ENCODE measurements at regions of chr7 and their contacts with region 1.

Region 1: DNA sequence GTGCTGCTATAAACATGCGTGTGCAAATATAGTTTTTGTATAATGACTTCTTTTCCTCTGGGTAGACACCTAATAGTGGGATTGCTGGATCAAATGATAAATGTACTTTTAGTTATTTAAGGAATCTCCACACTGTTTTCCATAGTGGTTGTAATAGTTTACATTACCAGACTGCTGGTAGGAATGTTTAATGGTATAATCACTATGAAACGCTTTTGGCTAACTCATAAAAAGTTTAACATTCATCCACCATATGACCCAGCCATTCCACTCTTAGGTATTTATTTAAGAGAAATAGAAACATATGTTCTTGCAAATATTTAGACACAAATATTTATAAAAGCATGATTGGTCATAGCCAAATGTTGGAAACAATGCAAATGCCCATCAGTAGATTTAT is 32.1 kb upstream of the TFEC start:
- DNase-seq: no peak
- H3K4me3 ChIP-seq: no peak overlapping the region
- H3K27ac ChIP-seq: no peak overlapping the region
- H3K4me1 ChIP-seq: no peaks in the 10 kb centered on the region
- H3K27me3 ChIP-seq: no peaks in the 10 kb centered on the region
- CTCF ChIP-seq: no peak
- EP300 ChIP-seq: no peak
- POLR2A ChIP-seq: no peak

Region 2: GRCh38 chr7:115593111-115593510 is 469.6 kb before region 1 on chr7:
- in situ Hi-C with region 1: no loop called
- intact Hi-C with region 1: loop called (anchors 5 kb)
- DNase-seq: no peak
- H3K4me3 ChIP-seq: no peak overlapping the region
- H3K27ac ChIP-seq: no peak overlapping the region
- H3K4me1 ChIP-seq: no peaks in the 10 kb centered on the region
- H3K27me3 ChIP-seq: no peaks in the 10 kb centered on the region
- CTCF ChIP-seq: no peak
- EP300 ChIP-seq: no peak
- POLR2A ChIP-seq: no peak

Measured in transverse colon (tissue), 4 donors.